Activated CD4-positive, alpha-beta memory T cell treated with anti-CD3 and anti-CD28 coated beads for 36 hours (primary cell): ENCODE measurements at regions of chr1 and their contacts with region 1.

Region 1: GRCh38 chr1:69737527-69738185 is 169.9 kb downstream of the LRRC7 start:
- DNase-seq: no peak
- H3K4me3 Mint-ChIP-seq: no peak overlapping the region
- H3K27ac Mint-ChIP-seq: no peak overlapping the region
- H3K4me1 Mint-ChIP-seq: no peaks in the 10 kb centered on the region
- H3K27me3 Mint-ChIP-seq: no peaks in the 10 kb centered on the region

Region 2: DNA sequence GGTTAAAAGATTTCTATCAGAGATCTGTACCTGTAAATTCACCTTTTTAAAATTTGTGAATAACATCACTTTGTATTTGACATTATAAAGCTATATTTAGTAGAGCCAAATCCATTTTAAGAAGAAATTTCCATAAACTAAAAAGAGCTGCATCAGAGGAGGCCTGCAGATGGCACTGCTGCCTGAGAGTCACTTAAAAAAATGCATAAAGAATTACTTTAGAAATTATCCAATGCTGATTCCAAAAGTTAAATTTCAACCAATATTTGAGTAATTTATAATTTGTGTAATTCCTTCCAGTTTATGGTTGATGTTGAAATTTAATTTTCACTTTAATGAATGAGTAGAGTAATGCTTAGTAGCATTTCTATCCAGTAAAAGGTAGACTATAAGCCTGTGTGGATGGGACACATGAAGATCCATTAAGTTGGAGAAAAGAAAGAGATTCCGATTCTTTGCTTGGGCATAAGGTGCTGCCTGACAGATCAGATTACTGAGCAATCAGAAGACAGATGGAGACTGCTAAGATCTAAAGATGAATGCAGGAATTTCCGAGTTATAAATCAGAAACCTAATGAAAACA is 1267.2 kb before region 1 on chr1:
- CTCF ChIA-PET with region 1: interaction called, 4 read pairs
- POLR2A ChIA-PET with region 1: no interaction called
- intact Hi-C with region 1: loop called (anchors 2 kb)
- DNase-seq: no peak
- H3K4me3 Mint-ChIP-seq: no peak overlapping the region
- H3K27ac Mint-ChIP-seq: no peak overlapping the region
- H3K4me1 Mint-ChIP-seq: no peaks in the 10 kb centered on the region
- H3K27me3 Mint-ChIP-seq: no peaks in the 10 kb centered on the region

Region 3: DNA sequence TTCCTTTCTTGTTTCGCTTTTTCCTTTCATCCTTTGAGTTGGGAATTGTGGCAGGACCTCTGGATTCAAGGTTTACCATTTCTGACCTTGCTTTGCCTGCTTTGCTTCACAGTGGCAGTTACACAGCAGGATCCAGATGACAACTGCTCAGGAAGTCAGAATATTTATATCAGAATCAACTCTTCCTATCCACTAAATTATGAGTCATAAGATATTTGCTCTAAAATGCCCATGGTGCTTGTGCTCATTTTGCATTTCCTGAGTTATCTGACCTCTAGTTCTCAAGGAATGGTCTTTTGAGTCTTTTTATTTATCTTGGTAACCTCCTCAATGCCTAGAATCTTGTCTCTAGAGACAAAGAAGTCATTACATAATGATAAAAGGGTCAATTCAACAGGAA is 120.9 kb after region 1 on chr1:
- CTCF ChIA-PET with region 1: no interaction called
- POLR2A ChIA-PET with region 1: no interaction called
- intact Hi-C with region 1: no loop called
- DNase-seq: no peak
- H3K4me3 Mint-ChIP-seq: no peak overlapping the region
- H3K27ac Mint-ChIP-seq: no peak overlapping the region
- H3K4me1 Mint-ChIP-seq: no peaks in the 10 kb centered on the region
- H3K27me3 Mint-ChIP-seq: no peaks in the 10 kb centered on the region

Region 4: DNA sequence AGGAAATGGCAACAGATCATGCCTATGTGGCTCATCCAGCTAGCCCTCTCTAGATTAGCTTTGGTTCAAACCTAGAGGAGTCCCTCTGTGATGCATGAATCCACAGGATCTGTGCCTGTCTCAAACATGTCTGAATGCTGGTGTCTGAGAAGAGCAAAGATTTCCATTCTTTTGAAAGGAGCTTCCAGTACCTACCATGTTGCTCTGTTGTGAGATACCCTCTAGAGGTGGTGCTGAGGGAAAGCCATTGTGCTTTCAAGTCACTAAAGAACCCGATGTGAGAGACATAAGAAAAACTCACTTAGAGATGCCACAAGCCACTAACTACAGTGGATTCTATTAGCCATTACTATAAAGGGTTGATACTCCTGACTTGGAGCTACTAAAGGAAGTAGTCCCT is 364.1 kb after region 1 on chr1:
- CTCF ChIA-PET with region 1: no interaction called
- POLR2A ChIA-PET with region 1: no interaction called
- intact Hi-C with region 1: no loop called
- DNase-seq: no peak
- H3K4me3 Mint-ChIP-seq: no peak overlapping the region
- H3K27ac Mint-ChIP-seq: no peak overlapping the region
- H3K4me1 Mint-ChIP-seq: no peaks in the 10 kb centered on the region
- H3K27me3 Mint-ChIP-seq: peaks cover under 1% of the 10 kb centered on the region